ENCODE measurements at regions of chr10 and their contacts with region 1.

Region 1: GRCh38 chr10:31011017-31011659 is 20.5 kb downstream of the ZNF438 start:
- DNase-seq: peak in 2 of 3 donors; percentile 25 to 41
- ATAC-seq: peak; percentile 76 to 93
- H3K4me3 ChIP-seq: no peak overlapping the region
- H3K27ac ChIP-seq: peak overlapping the region; percentile 30
- H3K4me1 ChIP-seq: peaks cover 4% of the 10 kb centered on the region
- H3K27me3 ChIP-seq: no peaks in the 10 kb centered on the region

Region 2: GRCh38 chr10:30967650-30968410 is 43.3 kb before region 1 on chr10:
- intact Hi-C with region 1: loop called in 2 of 4 experiments (anchors 10 kb)
- DNase-seq: no peak
- ATAC-seq: peak in 1 of 2 donors; percentile 16
- H3K4me3 ChIP-seq: no peak overlapping the region
- H3K27ac ChIP-seq: no peak overlapping the region
- H3K4me1 ChIP-seq: peaks cover 4% of the 10 kb centered on the region
- H3K27me3 ChIP-seq: no peaks in the 10 kb centered on the region

Measured in right cardiac atrium (tissue), 5 donors.